ENCODE measurements at regions of chr7 and their contacts with region 1.

Region 1: GRCh38 chr7:30062591-30062990 is 34.4 kb downstream of the PLEKHA8 start:
- DNase-seq: no peak
- H3K4me3 ChIP-seq: no peak overlapping the region
- H3K27ac ChIP-seq: no peak overlapping the region
- H3K4me1 ChIP-seq: no peaks in the 10 kb centered on the region
- H3K27me3 ChIP-seq: no peaks in the 10 kb centered on the region
- CTCF ChIP-seq: peak in 2 of 3 experiments; percentile 41 to 58; a peak in 2 of 4 replicates
- EP300 ChIP-seq: no peak
- POLR2A ChIP-seq: no peak
- RAD21 ChIP-seq: peak; percentile 56 to 67

Region 2: GRCh38 chr7:29955799-29956486 is 106.6 kb before region 1 on chr7:
- CTCF ChIA-PET with region 1: interaction called, 49 read pairs
- POLR2A ChIA-PET with region 1: no interaction called
- DNase-seq: no peak
- H3K4me3 ChIP-seq: no peak overlapping the region
- H3K27ac ChIP-seq: no peak overlapping the region
- H3K4me1 ChIP-seq: peaks cover 0 to 7% (median 3%) of the 10 kb centered on the region in 4 experiments; a peak in 4 of 7 replicates
- H3K27me3 ChIP-seq: no peaks in the 10 kb centered on the region
- CTCF ChIP-seq: no peak
- EP300 ChIP-seq: no peak
- POLR2A ChIP-seq: no peak
- RAD21 ChIP-seq: no peak

Region 3: DNA sequence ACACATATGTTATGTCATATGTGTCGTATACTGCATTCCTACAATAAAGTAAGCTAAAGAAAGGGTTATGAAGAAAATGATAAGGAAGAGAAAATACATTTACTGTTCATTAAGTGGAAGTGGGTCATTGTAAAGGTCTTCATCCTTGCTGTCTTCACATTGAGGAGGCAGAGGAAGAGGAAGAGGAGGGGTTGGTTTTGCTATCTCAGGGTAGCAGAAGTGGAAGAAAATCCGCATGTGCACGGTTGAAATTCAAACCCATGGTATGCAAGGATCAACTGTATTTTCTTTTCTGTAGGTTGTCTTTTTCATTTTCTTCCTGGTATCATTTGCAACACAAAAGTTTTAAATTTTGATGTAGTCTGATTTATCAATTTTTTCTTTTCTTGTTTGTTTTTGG is 28.1 kb before region 1 on chr7:
- CTCF ChIA-PET with region 1: interaction called, 13 read pairs
- POLR2A ChIA-PET with region 1: interaction called, 3 read pairs
- DNase-seq: no peak
- H3K4me3 ChIP-seq: no peak overlapping the region
- H3K27ac ChIP-seq: no peak overlapping the region
- H3K4me1 ChIP-seq: peaks cover 0 to 10% (median 4%) of the 10 kb centered on the region in 4 experiments; a peak in 5 of 7 replicates
- H3K27me3 ChIP-seq: no peaks in the 10 kb centered on the region
- CTCF ChIP-seq: no peak
- EP300 ChIP-seq: no peak
- POLR2A ChIP-seq: no peak
- RAD21 ChIP-seq: no peak

Region 4: DNA sequence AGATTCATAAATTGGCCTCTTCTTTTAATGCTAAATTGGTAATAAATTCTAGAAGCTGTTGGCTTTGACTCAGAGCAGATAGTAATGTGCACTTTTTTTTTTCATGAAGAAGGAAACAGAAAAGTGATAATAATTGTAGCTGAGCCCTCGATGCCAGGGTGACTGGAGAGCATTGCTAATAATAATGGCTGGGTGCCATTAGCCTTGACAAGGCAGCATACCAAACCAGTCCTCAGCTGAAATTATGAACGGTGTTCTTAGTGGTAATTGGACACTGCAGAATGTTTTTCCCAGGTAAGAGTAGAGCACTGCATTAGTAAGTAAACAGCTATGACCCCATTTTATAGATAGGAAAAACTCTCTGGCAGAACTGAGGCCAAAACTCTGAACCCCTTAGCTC is 15.5 kb before region 1 on chr7:
- CTCF ChIA-PET with region 1: interaction called, 11 read pairs
- POLR2A ChIA-PET with region 1: no interaction called
- DNase-seq: no peak
- H3K4me3 ChIP-seq: no peak overlapping the region
- H3K27ac ChIP-seq: no peak overlapping the region
- H3K4me1 ChIP-seq: no peaks in the 10 kb centered on the region
- H3K27me3 ChIP-seq: no peaks in the 10 kb centered on the region
- CTCF ChIP-seq: no peak
- EP300 ChIP-seq: no peak
- POLR2A ChIP-seq: no peak
- RAD21 ChIP-seq: no peak

Region 5: GRCh38 chr7:30087371-30087770 is 24.8 kb after region 1 on chr7:
- CTCF ChIA-PET with region 1: interaction called, 17 read pairs
- POLR2A ChIA-PET with region 1: no interaction called
- DNase-seq: no peak
- H3K4me3 ChIP-seq: no peak overlapping the region
- H3K27ac ChIP-seq: no peak overlapping the region
- H3K4me1 ChIP-seq: peaks cover 0 to 3% (median 0%) of the 10 kb centered on the region in 4 experiments; a peak in 1 of 7 replicates
- H3K27me3 ChIP-seq: no peaks in the 10 kb centered on the region
- CTCF ChIP-seq: no peak
- EP300 ChIP-seq: no peak
- POLR2A ChIP-seq: no peak
- RAD21 ChIP-seq: no peak

Measured in H1 (cell line).